Esophagus muscularis mucosa (tissue), 4 donors: ENCODE measurements at regions of chr9 and their contacts with region 1.

Region 1: GRCh38 chr9:385818-386398 is 171.2 kb downstream of the DOCK8 start:
- DNase-seq: no peak
- H3K4me3 ChIP-seq: no peak overlapping the region
- H3K27ac ChIP-seq: no peak overlapping the region
- H3K4me1 ChIP-seq: no peaks in the 10 kb centered on the region
- H3K27me3 ChIP-seq: no peaks in the 10 kb centered on the region
- CTCF ChIP-seq: peak; percentile 57 to 80 (median 62)
- EP300 ChIP-seq: no peak
- POLR2A ChIP-seq: no peak

Region 2: DNA sequence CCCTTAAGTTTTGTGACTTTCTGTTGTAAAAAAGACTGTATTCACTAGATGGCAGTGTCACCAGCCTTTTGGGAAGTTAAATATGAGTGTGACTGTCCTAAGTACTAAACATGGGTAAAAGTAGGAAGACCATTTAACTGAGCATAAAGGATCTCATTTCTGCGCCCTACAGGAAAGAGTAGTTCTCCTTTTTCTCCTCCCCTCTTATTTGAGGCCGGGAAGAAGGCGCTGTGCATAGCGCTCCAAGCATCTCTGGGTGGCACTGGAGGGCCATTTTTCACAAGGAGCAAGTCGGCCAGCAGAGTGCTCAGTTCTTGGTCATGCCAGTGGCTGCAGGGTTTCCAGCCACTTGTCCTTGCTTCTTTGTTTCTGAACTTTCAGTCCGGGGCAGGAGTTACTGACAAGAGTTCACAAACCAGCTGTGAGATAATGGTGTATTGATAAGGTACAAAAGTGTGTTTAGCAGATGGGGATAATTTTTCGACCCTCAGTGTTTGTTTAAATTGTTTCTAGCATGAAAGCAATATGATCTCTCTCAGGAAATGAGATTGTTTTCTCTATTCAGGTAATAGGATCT is 228.0 kb after region 1 on chr9:
- intact Hi-C with region 1: loop called (anchors 10 kb)
- DNase-seq: no peak
- H3K4me3 ChIP-seq: peak overlapping the region in 2 of 4 donors; percentile 4 to 9
- H3K27ac ChIP-seq: peak overlapping the region; percentile 56 to 69 (median 66)
- H3K4me1 ChIP-seq: peaks cover 26 to 39% (median 31%) of the 10 kb centered on the region in 4 donors
- H3K27me3 ChIP-seq: no peaks in the 10 kb centered on the region
- CTCF ChIP-seq: peak; percentile 85 to 94 (median 89)
- EP300 ChIP-seq: no peak
- POLR2A ChIP-seq: no peak